Naive thymus-derived CD4-positive, alpha-beta T cell (primary cell): ENCODE measurements at regions of chr2 and their contacts with region 1.

Region 1: GRCh38 chr2:53786705-53787612 is at the starts of genes ASB3 and ERLEC1:
- DNase-seq: peak; percentile 69 to 87 (median 83)
- ATAC-seq: peak; percentile 95
- H3K4me3 ChIP-seq: peak within 1 kb of the TSS; percentile 66
- H3K4me3 Mint-ChIP-seq: peak within 1 kb of the TSS; percentile 88 to 99 (median 98)
- H3K27ac ChIP-seq: peak within 1 kb of the TSS; percentile 82
- H3K27ac Mint-ChIP-seq: peak within 1 kb of the TSS; percentile 81 to 99 (median 96)
- H3K4me1 ChIP-seq: peaks cover 14 to 16% of the 10 kb centered on the region in 2 donors
- H3K4me1 Mint-ChIP-seq: peaks cover 37 to 79% (median 67%) of the 10 kb centered on the region in 7 donors
- H3K27me3 ChIP-seq: no peaks in the 10 kb centered on the region
- H3K27me3 Mint-ChIP-seq: no peaks in the 10 kb centered on the region
- total RNA-seq, gene ASB3: 24.9 to 43.2 (median 34.5) TPM
- total RNA-seq, gene ERLEC1: 13.3 to 30.1 (median 26.3) TPM

Region 2: GRCh38 chr2:53381271-53381670 is 405.7 kb before region 1 on chr2:
- CTCF ChIA-PET with region 1: no interaction called
- POLR2A ChIA-PET with region 1: no interaction called
- intact Hi-C with region 1: no loop called
- DNase-seq: no peak
- ATAC-seq: no peak
- H3K4me3 ChIP-seq: no peak overlapping the region
- H3K4me3 Mint-ChIP-seq: no peak overlapping the region
- H3K27ac ChIP-seq: no peak overlapping the region
- H3K27ac Mint-ChIP-seq: no peak overlapping the region
- H3K4me1 ChIP-seq: no peaks in the 10 kb centered on the region
- H3K4me1 Mint-ChIP-seq: no peaks in the 10 kb centered on the region
- H3K27me3 ChIP-seq: no peaks in the 10 kb centered on the region
- H3K27me3 Mint-ChIP-seq: peaks cover 0 to 5% (median 0%) of the 10 kb centered on the region in 5 donors

Region 3: GRCh38 chr2:53740170-53740569 is 46.8 kb before region 1 on chr2:
- CTCF ChIA-PET with region 1: no interaction called
- POLR2A ChIA-PET with region 1: no interaction called
- intact Hi-C with region 1: no loop called
- DNase-seq: no peak
- ATAC-seq: no peak
- H3K4me3 ChIP-seq: no peak overlapping the region
- H3K4me3 Mint-ChIP-seq: no peak overlapping the region
- H3K27ac ChIP-seq: no peak overlapping the region
- H3K27ac Mint-ChIP-seq: no peak overlapping the region
- H3K4me1 ChIP-seq: no peaks in the 10 kb centered on the region
- H3K4me1 Mint-ChIP-seq: peaks cover 5 to 26% (median 17%) of the 10 kb centered on the region in 7 donors
- H3K27me3 ChIP-seq: no peaks in the 10 kb centered on the region
- H3K27me3 Mint-ChIP-seq: no peaks in the 10 kb centered on the region

Region 4: GRCh38 chr2:53767405-53768241 is 19.3 kb before region 1 on chr2 and contains the start of gene CHAC2:
- CTCF ChIA-PET with region 1: interaction called, 7 read pairs
- POLR2A ChIA-PET with region 1: interaction called, 59 read pairs
- intact Hi-C with region 1: loop called (anchors 1 kb)
- DNase-seq: peak; percentile 74 to 86 (median 84)
- ATAC-seq: peak; percentile 93
- H3K4me3 ChIP-seq: peak within 1 kb of the TSS; percentile 80
- H3K4me3 Mint-ChIP-seq: peak within 1 kb of the TSS; percentile 88 to 98 (median 92)
- H3K27ac ChIP-seq: peak within 1 kb of the TSS; percentile 86
- H3K27ac Mint-ChIP-seq: peak within 1 kb of the TSS; percentile 60 to 99 (median 90)
- H3K4me1 ChIP-seq: peaks cover 0 to 8% of the 10 kb centered on the region in 2 donors
- H3K4me1 Mint-ChIP-seq: peaks cover 7 to 41% (median 33%) of the 10 kb centered on the region in 7 donors
- H3K27me3 ChIP-seq: no peaks in the 10 kb centered on the region
- H3K27me3 Mint-ChIP-seq: no peaks in the 10 kb centered on the region
- total RNA-seq, gene CHAC2: 0.29 to 12.1 (median 1.2) TPM

Region 5: DNA sequence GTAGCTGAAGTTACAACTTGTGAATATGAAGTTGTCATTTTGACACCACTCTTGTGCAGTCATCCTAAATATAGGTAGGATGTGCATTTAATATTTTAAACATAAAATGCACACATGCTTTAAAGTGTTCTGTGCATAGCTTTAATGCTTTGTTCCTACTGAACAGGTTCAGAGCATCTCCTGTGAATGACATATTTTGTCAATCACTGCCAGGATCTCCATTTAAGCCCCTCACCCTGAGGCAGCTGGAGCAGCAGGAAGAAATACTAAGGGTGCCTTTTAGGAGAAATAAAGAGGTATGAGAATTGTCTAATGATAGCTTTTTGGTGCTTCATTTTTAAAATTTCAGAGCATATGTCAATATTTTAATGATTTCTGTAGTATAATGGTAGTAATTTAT is 14.6 kb after region 1 on chr2:
- CTCF ChIA-PET with region 1: interaction called, 3 read pairs
- POLR2A ChIA-PET with region 1: interaction called, 3 read pairs
- intact Hi-C with region 1: loop called in 1 of 2 experiments (anchors 2 kb)
- DNase-seq: no peak
- ATAC-seq: no peak
- H3K4me3 ChIP-seq: no peak overlapping the region
- H3K4me3 Mint-ChIP-seq: no peak overlapping the region
- H3K27ac ChIP-seq: no peak overlapping the region
- H3K27ac Mint-ChIP-seq: peak overlapping the region in 2 of 9 donors; percentile 4 to 34
- H3K4me1 ChIP-seq: no peaks in the 10 kb centered on the region
- H3K4me1 Mint-ChIP-seq: peaks cover 0 to 3% (median 0%) of the 10 kb centered on the region in 7 donors
- H3K27me3 ChIP-seq: no peaks in the 10 kb centered on the region
- H3K27me3 Mint-ChIP-seq: no peaks in the 10 kb centered on the region

Region 6: DNA sequence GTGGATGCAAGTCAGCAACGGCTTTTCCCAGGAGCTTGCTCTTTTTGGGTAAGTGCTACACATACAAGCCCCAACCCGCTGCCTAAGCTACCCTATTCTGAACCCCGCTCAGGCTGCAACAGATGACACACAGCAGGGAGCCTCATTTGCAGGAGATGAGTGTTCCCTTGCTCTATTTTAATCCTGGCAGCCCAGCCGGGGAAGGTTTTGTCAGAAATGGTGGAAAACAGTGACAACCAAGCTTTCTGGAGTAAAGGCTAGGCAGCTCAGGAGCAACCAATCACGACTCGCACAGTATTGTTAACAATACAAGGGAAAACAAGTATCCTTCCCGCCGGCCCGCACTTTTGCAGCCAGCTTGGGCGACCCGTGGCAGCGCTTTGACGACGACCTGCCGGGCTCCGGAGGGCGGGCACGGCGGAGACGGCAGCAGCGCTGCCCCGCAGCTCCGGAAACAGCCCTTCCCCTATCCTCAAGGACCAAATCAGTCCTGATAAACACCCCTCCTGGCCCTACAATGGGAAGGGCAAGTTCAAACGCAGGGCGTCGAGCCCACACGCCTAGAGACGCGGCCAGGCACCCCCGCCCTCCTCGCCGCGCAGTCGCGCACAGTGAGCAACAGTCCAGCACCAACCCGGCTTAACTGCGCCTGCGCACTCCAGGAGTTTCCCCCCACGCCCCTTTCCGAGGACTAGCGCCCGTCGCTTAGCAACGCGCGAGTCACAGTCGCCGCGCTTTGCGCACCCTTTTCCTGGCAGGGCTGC is 543.4 kb after region 1 on chr2:
- CTCF ChIA-PET with region 1: no interaction called
- POLR2A ChIA-PET with region 1: no interaction called
- intact Hi-C with region 1: loop called in 1 of 2 experiments (anchors 5 kb)
- DNase-seq: peak; percentile 64 to 86 (median 82)
- ATAC-seq: peak; percentile 98
- H3K4me3 ChIP-seq: peak overlapping the region; percentile 74
- H3K4me3 Mint-ChIP-seq: peak overlapping the region; percentile 88 to 95 (median 91)
- H3K27ac ChIP-seq: peak overlapping the region; percentile 45
- H3K27ac Mint-ChIP-seq: peak overlapping the region; percentile 5 to 89 (median 76)
- H3K4me1 ChIP-seq: peaks cover 0 to 4% of the 10 kb centered on the region in 2 donors
- H3K4me1 Mint-ChIP-seq: peaks cover 6 to 16% (median 9%) of the 10 kb centered on the region in 7 donors
- H3K27me3 ChIP-seq: peaks cover 0 to 5% of the 10 kb centered on the region in 2 donors
- H3K27me3 Mint-ChIP-seq: peaks cover 7 to 39% (median 14%) of the 10 kb centered on the region in 5 donors

Region 7: GRCh38 chr2:55693181-55694134 is 1906.5 kb after region 1 on chr2 and contains the start of gene PNPT1:
- CTCF ChIA-PET with region 1: no interaction called
- POLR2A ChIA-PET with region 1: no interaction called
- intact Hi-C with region 1: loop called in 1 of 2 experiments (anchors 1 kb)
- DNase-seq: peak; percentile 78 to 92 (median 90)
- ATAC-seq: peak; percentile 100
- H3K4me3 ChIP-seq: peak within 1 kb of the TSS; percentile 90
- H3K4me3 Mint-ChIP-seq: peak within 1 kb of the TSS; percentile 94 to 99 (median 97)
- H3K27ac ChIP-seq: peak within 1 kb of the TSS; percentile 72
- H3K27ac Mint-ChIP-seq: peak within 1 kb of the TSS; percentile 92 to 99 (median 96)
- H3K4me1 ChIP-seq: peaks cover 0 to 6% of the 10 kb centered on the region in 2 donors
- H3K4me1 Mint-ChIP-seq: peaks cover 18 to 50% (median 43%) of the 10 kb centered on the region in 7 donors
- H3K27me3 ChIP-seq: no peaks in the 10 kb centered on the region
- H3K27me3 Mint-ChIP-seq: peaks cover 0 to 6% (median 3%) of the 10 kb centered on the region in 5 donors
- total RNA-seq, gene PNPT1: 16.9 to 31.2 (median 18.5) TPM